GM12878 (cell line): ENCODE measurements at regions of chr3 and their contacts with region 1.

Region 1: GRCh38 chr3:32960404-32961170 is 9.1 kb downstream of the CCR4 start:
- DNase-seq: no peak
- ATAC-seq: peak; percentile 95
- H3K4me3 ChIP-seq: no peak overlapping the region
- H3K27ac ChIP-seq: no peak overlapping the region
- H3K4me1 ChIP-seq: peaks cover 5% of the 10 kb centered on the region
- H3K27me3 ChIP-seq: no peaks in the 10 kb centered on the region
- CTCF ChIP-seq: no peak
- EP300 ChIP-seq: no peak
- POLR2A ChIP-seq: no peak
- RAD21 ChIP-seq: no peak

Region 2: DNA sequence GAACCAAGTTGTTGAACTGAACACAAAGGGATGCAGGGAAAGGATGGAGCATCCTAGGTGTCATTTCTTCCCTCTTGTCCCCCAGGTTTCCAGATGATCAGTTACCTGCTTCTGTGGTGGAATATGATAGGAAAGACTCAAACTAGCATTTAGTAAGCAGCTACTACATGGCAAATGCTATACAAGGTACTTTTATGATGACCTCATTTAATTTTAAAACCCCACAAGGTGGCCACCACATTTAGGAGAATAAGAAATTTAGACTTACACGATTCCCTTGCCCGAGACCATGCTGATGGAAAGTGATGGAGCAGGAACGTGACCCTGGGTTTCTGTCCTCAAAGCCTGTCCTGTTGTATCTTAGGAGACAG is 31.7 kb after region 1 on chr3:
- CTCF ChIA-PET with region 1: interaction called, 4 read pairs
- POLR2A ChIA-PET with region 1: no interaction called
- RAD21 ChIA-PET with region 1: interaction called, 3 read pairs
- SMC1A ChIA-PET with region 1: interaction called, 3 read pairs
- in situ Hi-C with region 1: no loop called
- intact Hi-C with region 1: loop called (anchors 2 kb)
- DNase-seq: no peak
- ATAC-seq: peak; percentile 46
- H3K4me3 ChIP-seq: no peak overlapping the region
- H3K27ac ChIP-seq: peak overlapping the region; percentile 70
- H3K4me1 ChIP-seq: peaks cover 6% of the 10 kb centered on the region
- H3K27me3 ChIP-seq: no peaks in the 10 kb centered on the region
- CTCF ChIP-seq: no peak
- EP300 ChIP-seq: no peak
- POLR2A ChIP-seq: no peak
- RAD21 ChIP-seq: no peak